ENCODE measurements at regions of chr10 and their contacts with region 1.

Region 1: DNA sequence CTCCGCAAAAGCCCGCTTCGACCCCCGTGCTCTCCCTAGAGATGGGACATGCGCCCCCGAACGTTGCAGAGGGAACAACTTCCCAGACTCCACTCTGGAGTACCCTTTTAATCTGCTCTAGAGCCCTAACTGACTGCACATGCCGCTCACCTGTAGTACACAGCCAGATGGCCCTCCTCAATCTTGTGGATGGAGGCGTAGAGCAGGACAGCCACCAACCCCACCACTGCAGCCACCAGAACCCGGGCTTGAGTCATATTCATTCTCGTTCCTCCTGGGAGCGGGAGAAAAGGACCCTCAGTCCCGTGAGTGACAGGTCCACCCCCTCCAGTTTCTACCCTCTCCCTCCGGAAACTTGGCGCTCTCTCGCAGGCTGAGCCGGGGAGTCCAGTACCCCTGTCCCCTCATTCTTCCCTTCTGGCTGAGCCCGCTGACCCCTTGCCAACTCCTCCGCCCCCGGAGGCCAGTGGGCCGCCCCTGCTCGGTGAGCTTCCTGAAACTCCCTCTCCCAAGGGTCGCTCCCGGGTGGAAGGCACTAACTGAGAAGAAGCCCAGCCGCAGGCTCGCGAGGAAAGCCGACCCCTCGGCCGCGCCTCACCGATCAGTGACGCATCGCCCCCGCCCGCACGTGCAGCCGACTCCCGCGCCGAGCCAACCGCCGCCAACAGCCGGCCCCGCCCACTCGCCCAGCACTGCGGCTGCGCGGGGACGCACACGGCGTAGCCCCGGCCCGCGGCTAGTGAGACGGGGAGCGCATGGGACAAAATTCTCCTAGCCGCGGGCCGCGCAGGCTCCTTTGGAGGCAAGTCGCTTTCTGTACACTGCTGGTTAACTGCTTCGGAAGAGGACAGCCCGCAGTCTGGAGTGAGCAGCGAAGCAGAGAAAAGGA is at the start of gene ERLIN1:
- DNase-seq: peak; percentile 98
- H3K4me3 Mint-ChIP-seq: peak within 1 kb of the TSS; percentile 95
- H3K27ac Mint-ChIP-seq: peak within 1 kb of the TSS; percentile 97
- H3K4me1 Mint-ChIP-seq: peaks cover 41% of the 10 kb centered on the region
- H3K27me3 Mint-ChIP-seq: no peaks in the 10 kb centered on the region
- total RNA-seq, gene ERLIN1: 20.2 TPM in 2 replicates

Region 2: DNA sequence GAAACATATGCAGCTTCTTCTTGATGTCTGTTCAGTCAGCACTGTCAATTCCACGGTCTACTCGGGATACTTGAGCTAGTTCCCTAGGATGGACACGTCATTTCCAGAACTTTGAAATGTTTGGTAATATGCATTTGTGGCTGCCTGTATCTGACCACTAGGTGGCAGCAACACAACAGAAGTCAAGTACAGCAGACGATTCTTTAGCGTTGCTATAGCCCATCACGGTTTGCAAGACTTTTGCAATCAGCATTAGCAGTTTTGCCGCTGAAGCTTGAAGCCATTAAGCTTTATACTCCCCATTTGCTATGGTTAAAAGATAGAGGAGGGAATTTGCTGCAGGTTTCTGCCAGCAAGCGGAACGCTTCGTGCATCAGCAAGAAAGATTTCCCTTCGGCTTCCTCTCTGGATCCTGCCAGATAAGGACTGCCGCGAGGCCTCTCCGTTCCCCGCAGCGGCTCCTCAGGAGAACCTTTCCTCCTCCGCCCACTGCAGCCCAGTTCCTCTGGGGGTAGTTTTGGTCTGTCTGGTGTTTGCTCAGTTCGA is 339.7 kb before region 1 on chr10:
- intact Hi-C with region 1: loop called (anchors 10 kb)
- DNase-seq: peak; percentile 92
- H3K4me3 Mint-ChIP-seq: peak overlapping the region; percentile 36
- H3K27ac Mint-ChIP-seq: no peak overlapping the region
- H3K4me1 Mint-ChIP-seq: peaks cover 4% of the 10 kb centered on the region
- H3K27me3 Mint-ChIP-seq: no peaks in the 10 kb centered on the region

Region 3: GRCh38 chr10:100148353-100149211 is 37.0 kb before region 1 on chr10:
- intact Hi-C with region 1: loop called (anchors 1 kb)
- DNase-seq: no peak
- H3K4me3 Mint-ChIP-seq: peak overlapping the region; percentile 29
- H3K27ac Mint-ChIP-seq: peak overlapping the region; percentile 84
- H3K4me1 Mint-ChIP-seq: peaks cover 15% of the 10 kb centered on the region
- H3K27me3 Mint-ChIP-seq: peaks cover 3% of the 10 kb centered on the region

Region 4: GRCh38 chr10:100174699-100175677 is 10.6 kb before region 1 on chr10:
- intact Hi-C with region 1: loop called (anchors 1 kb)
- DNase-seq: peak; percentile 56
- H3K4me3 Mint-ChIP-seq: peak overlapping the region; percentile 32
- H3K27ac Mint-ChIP-seq: peak overlapping the region; percentile 79
- H3K4me1 Mint-ChIP-seq: peaks cover 21% of the 10 kb centered on the region
- H3K27me3 Mint-ChIP-seq: no peaks in the 10 kb centered on the region

Region 5: GRCh38 chr10:100204370-100204769 is 18.8 kb after region 1 on chr10:
- intact Hi-C with region 1: no loop called
- DNase-seq: no peak
- H3K4me3 Mint-ChIP-seq: no peak overlapping the region
- H3K27ac Mint-ChIP-seq: no peak overlapping the region
- H3K4me1 Mint-ChIP-seq: peaks cover 7% of the 10 kb centered on the region
- H3K27me3 Mint-ChIP-seq: no peaks in the 10 kb centered on the region

Region 6: GRCh38 chr10:100229819-100230422 is 44.3 kb after region 1 on chr10:
- intact Hi-C with region 1: loop called (anchors 2 kb)
- DNase-seq: no peak
- H3K4me3 Mint-ChIP-seq: peak overlapping the region; percentile 86
- H3K27ac Mint-ChIP-seq: peak overlapping the region; percentile 81
- H3K4me1 Mint-ChIP-seq: peaks cover 27% of the 10 kb centered on the region
- H3K27me3 Mint-ChIP-seq: no peaks in the 10 kb centered on the region

Region 7: GRCh38 chr10:100286051-100287033 is 100.7 kb after region 1 on chr10 and contains the start of gene BLOC1S2:
- intact Hi-C with region 1: loop called (anchors 1 kb)
- DNase-seq: peak; percentile 98
- H3K4me3 Mint-ChIP-seq: peak within 1 kb of the TSS; percentile 97
- H3K27ac Mint-ChIP-seq: peak within 1 kb of the TSS; percentile 98
- H3K4me1 Mint-ChIP-seq: peaks cover 18% of the 10 kb centered on the region
- H3K27me3 Mint-ChIP-seq: peaks cover under 1% of the 10 kb centered on the region
- total RNA-seq, gene BLOC1S2: 62.0 and 62.5 TPM in 2 replicates

Region 8: GRCh38 chr10:100529475-100530298 is 344.1 kb after region 1 on chr10 and contains the start of gene NDUFB8:
- intact Hi-C with region 1: loop called (anchors 2 kb)
- DNase-seq: peak; percentile 97
- H3K4me3 Mint-ChIP-seq: peak within 1 kb of the TSS; percentile 87
- H3K27ac Mint-ChIP-seq: peak within 1 kb of the TSS; percentile 91
- H3K4me1 Mint-ChIP-seq: peaks cover 28% of the 10 kb centered on the region
- H3K27me3 Mint-ChIP-seq: no peaks in the 10 kb centered on the region
- total RNA-seq, gene NDUFB8: 323 TPM in 2 replicates